Activated B cell treated with CpG ODN at 0.5 μM for 24 hours (primary cell): ENCODE measurements at regions of chr6 and their contacts with region 1.

Region 1: GRCh38 chr6:32666420-32667300 is at the start of gene HLA-DQB1:
- DNase-seq: no peak
- ATAC-seq: peak; percentile 65
- H3K4me3 Mint-ChIP-seq: peak within 1 kb of the TSS; percentile 90
- H3K27ac Mint-ChIP-seq: peak within 1 kb of the TSS; percentile 94
- H3K4me1 Mint-ChIP-seq: peaks cover 65% of the 10 kb centered on the region
- H3K27me3 Mint-ChIP-seq: no peaks in the 10 kb centered on the region
- CTCF ChIP-seq: no peak
- total RNA-seq, gene HLA-DQB1: 262 and 310 TPM in 2 replicates

Region 2: GRCh38 chr6:32355018-32355417 is 311.6 kb before region 1 on chr6:
- CTCF ChIA-PET with region 1: no interaction called
- POLR2A ChIA-PET with region 1: no interaction called
- intact Hi-C with region 1: no loop called
- DNase-seq: no peak
- ATAC-seq: no peak
- H3K4me3 Mint-ChIP-seq: no peak overlapping the region
- H3K27ac Mint-ChIP-seq: no peak overlapping the region
- H3K4me1 Mint-ChIP-seq: peaks cover 12% of the 10 kb centered on the region
- H3K27me3 Mint-ChIP-seq: no peaks in the 10 kb centered on the region
- CTCF ChIP-seq: no peak

Region 3: GRCh38 chr6:32432050-32432450 is 234.6 kb before region 1 on chr6:
- CTCF ChIA-PET with region 1: interaction called, 4 read pairs
- POLR2A ChIA-PET with region 1: interaction called, 15 read pairs
- intact Hi-C with region 1: no loop called
- DNase-seq: no peak
- ATAC-seq: peak; percentile 43
- H3K4me3 Mint-ChIP-seq: no peak overlapping the region
- H3K27ac Mint-ChIP-seq: peak overlapping the region; percentile 24
- H3K4me1 Mint-ChIP-seq: peaks cover 33% of the 10 kb centered on the region
- H3K27me3 Mint-ChIP-seq: no peaks in the 10 kb centered on the region
- CTCF ChIP-seq: peak; percentile 65

Region 4: GRCh38 chr6:32604434-32604877 is 62.2 kb before region 1 on chr6:
- CTCF ChIA-PET with region 1: no interaction called
- POLR2A ChIA-PET with region 1: interaction called, 36 read pairs
- intact Hi-C with region 1: loop called (anchors 5 kb)
- DNase-seq: no peak
- ATAC-seq: peak; percentile 68
- H3K4me3 Mint-ChIP-seq: peak overlapping the region; percentile 74
- H3K27ac Mint-ChIP-seq: peak overlapping the region; percentile 93
- H3K4me1 Mint-ChIP-seq: peaks cover 76% of the 10 kb centered on the region
- H3K27me3 Mint-ChIP-seq: no peaks in the 10 kb centered on the region
- CTCF ChIP-seq: no peak

Region 5: GRCh38 chr6:32692019-32692418 is 25.4 kb after region 1 on chr6:
- CTCF ChIA-PET with region 1: interaction called, 15 read pairs
- POLR2A ChIA-PET with region 1: interaction called, 387 read pairs
- intact Hi-C with region 1: loop called (anchors 1 kb)
- DNase-seq: no peak
- ATAC-seq: peak; percentile 49
- H3K4me3 Mint-ChIP-seq: peak overlapping the region; percentile 3
- H3K27ac Mint-ChIP-seq: peak overlapping the region; percentile 85
- H3K4me1 Mint-ChIP-seq: peaks cover 54% of the 10 kb centered on the region
- H3K27me3 Mint-ChIP-seq: no peaks in the 10 kb centered on the region
- CTCF ChIP-seq: no peak

Region 6: DNA sequence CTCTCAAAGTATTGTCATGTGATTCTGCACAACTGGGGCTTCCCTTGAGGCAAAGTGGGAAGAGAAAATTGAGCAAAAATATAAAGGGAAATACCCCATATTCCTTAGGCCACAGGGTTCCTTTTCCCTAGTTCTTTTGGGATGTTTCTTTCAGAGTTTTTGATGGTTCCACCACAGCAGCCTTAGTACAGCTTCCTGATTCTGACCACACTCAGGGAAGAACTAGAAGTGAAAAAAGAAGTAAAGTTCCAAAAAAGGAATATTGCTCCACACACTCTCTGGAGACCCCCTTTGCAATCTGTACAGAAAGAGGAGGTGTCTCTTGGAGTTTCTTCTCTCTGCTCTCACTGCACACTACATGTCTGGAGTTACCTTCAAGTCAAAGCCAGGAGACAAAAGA is 46.6 kb after region 1 on chr6:
- CTCF ChIA-PET with region 1: no interaction called
- POLR2A ChIA-PET with region 1: no interaction called
- intact Hi-C with region 1: no loop called
- DNase-seq: no peak
- ATAC-seq: no peak
- H3K4me3 Mint-ChIP-seq: no peak overlapping the region
- H3K27ac Mint-ChIP-seq: no peak overlapping the region
- H3K4me1 Mint-ChIP-seq: no peaks in the 10 kb centered on the region
- H3K27me3 Mint-ChIP-seq: no peaks in the 10 kb centered on the region
- CTCF ChIP-seq: no peak

Region 7: DNA sequence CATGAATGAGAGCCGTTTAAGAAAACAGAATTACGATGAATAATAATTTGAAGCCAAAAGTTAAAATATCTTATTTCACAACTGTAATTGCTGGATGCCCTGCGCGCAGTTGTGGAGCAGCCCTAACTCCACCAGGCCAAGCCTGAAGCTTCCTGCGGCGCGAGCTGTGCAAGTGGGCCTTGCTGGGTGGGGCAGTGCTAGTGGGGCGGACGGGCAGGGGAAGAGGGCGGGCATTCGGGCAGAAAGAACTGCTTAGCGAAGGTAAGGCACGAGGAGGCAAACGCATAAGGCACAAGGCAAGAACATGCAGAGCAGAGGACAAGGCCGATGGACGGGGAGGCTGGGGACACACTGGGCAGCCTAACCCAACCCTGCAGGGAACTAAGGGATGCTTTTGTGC is 94.4 kb after region 1 on chr6:
- CTCF ChIA-PET with region 1: interaction called, 3 read pairs
- POLR2A ChIA-PET with region 1: interaction called, 205 read pairs
- intact Hi-C with region 1: no loop called
- DNase-seq: no peak
- ATAC-seq: peak; percentile 42
- H3K4me3 Mint-ChIP-seq: peak overlapping the region; percentile 83
- H3K27ac Mint-ChIP-seq: peak overlapping the region; percentile 86
- H3K4me1 Mint-ChIP-seq: peaks cover 6% of the 10 kb centered on the region
- H3K27me3 Mint-ChIP-seq: peaks cover 6% of the 10 kb centered on the region
- CTCF ChIP-seq: no peak

Region 8: DNA sequence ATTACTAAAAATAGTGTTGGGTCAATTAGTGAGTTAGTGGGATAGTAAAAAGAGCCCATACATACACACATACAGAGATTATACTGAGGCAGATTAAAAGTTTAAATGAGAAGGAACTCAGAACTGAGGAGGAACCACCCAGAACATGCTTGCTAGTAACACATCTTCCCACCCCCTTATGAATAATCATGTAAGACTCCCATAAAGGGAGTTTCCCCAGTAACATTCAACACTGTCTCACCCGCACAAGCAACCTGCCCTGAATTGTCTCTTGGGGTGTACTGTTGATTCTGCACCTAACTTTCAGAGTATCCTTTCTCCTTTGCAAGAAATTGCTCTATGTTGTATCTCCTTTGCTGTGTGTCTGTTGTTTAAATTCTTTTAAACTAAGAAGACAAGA is 107.8 kb after region 1 on chr6:
- CTCF ChIA-PET with region 1: no interaction called
- POLR2A ChIA-PET with region 1: no interaction called
- intact Hi-C with region 1: no loop called
- DNase-seq: no peak
- ATAC-seq: peak; percentile 89
- H3K4me3 Mint-ChIP-seq: no peak overlapping the region
- H3K27ac Mint-ChIP-seq: no peak overlapping the region
- H3K4me1 Mint-ChIP-seq: peaks cover 7% of the 10 kb centered on the region
- H3K27me3 Mint-ChIP-seq: peaks cover 6% of the 10 kb centered on the region
- CTCF ChIP-seq: no peak